ENCODE measurements at regions of chr12 and their contacts with region 1.

Region 1: DNA sequence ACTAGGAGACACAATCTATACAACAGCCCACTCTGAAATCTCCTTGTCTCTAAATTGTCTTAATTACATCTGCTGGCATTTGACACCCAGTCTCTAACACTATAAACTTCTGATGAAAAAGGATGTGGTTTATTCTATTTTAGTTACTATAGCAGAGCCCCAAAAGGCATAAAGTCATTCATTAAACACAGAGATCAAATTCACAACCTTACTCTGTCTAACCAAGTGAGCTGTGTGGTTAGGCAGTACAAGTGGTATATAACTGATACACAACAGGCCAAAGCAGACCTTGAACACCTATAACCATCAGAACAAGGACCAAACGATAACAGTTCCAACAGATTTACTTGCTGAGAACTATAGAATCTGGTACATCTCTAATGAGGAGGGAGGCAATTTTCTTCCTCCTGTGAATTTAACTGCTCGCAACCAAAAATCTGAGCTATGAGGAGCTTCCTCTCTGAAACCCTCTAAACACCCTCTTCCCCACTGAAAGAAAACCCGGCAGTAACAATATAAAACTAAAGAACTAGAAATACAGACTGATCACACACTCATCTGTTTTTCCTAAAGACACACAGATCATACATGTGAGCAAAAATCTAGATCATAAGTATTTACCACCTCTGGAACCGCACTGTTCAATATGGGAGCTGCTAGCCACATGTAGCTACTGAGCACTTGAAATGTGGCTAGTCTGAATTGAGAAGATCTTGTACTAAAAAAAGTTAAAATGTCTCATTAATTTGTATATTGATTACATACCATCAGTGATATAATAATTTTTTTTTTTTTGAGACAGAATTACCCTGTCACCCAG is 17.7 kb downstream of the SPPL3 start:
- DNase-seq: no peak
- ATAC-seq: no peak
- H3K4me3 ChIP-seq: no peak overlapping the region
- H3K27ac ChIP-seq: no peak overlapping the region
- H3K4me1 ChIP-seq: peaks cover 0 to 69% (median 19%) of the 10 kb centered on the region in 12 donors
- H3K27me3 ChIP-seq: no peaks in the 10 kb centered on the region
- CTCF ChIP-seq: no peak
- POLR2A ChIP-seq: no peak

Region 2: DNA sequence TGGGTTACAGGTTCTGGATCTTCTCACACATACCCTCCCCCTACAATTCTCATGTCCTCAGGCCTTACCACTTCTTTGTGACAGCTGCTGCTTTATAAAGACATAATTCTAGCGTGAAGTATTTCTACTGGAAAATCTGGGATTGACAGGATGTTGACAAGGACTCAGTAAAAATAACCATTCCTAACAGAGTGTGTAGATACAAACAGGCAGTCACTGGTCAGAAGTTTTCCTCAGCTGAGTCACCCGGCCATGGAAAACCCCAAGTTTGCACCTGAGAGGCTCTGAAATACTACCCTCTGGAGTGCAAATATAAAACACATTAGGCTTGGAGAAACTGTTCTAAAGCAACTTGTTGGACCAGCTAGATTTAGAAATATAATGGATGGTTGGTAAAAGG is 36.6 kb before region 1 on chr12:
- intact Hi-C with region 1: loop called in 1 of 10 experiments (anchors 5 kb)
- DNase-seq: no peak
- ATAC-seq: peak; percentile 31 to 84 (median 55)
- H3K4me3 ChIP-seq: no peak overlapping the region
- H3K27ac ChIP-seq: peak overlapping the region in 9 of 12 donors; percentile 16 to 73 (median 51)
- H3K4me1 ChIP-seq: peaks cover 0 to 89% (median 67%) of the 10 kb centered on the region in 12 donors
- H3K27me3 ChIP-seq: no peaks in the 10 kb centered on the region
- CTCF ChIP-seq: no peak
- POLR2A ChIP-seq: no peak

Region 3: GRCh38 chr12:121637231-121637914 is 751.0 kb after region 1 on chr12:
- intact Hi-C with region 1: no loop called
- DNase-seq: peak in 3 of 5 donors; percentile 33 to 72 (median 38)
- ATAC-seq: peak in 2 of 4 donors; percentile 52 to 66
- H3K4me3 ChIP-seq: no peak overlapping the region
- H3K27ac ChIP-seq: peak overlapping the region in 1 of 12 donors; percentile 85
- H3K4me1 ChIP-seq: peaks cover 0 to 29% (median 5%) of the 10 kb centered on the region in 12 donors
- H3K27me3 ChIP-seq: no peaks in the 10 kb centered on the region
- CTCF ChIP-seq: no peak
- POLR2A ChIP-seq: no peak

Region 4: GRCh38 chr12:122064025-122064777 is 1177.8 kb after region 1 on chr12:
- intact Hi-C with region 1: loop called in 1 of 10 experiments (anchors 10 kb)
- DNase-seq: peak; percentile 88 to 94 (median 91)
- ATAC-seq: peak; percentile 90 to 95 (median 92)
- H3K4me3 ChIP-seq: peak overlapping the region in 6 of 12 donors; percentile 15 to 32 (median 25)
- H3K27ac ChIP-seq: peak overlapping the region; percentile 33 to 89 (median 76)
- H3K4me1 ChIP-seq: peaks cover 0 to 53% (median 34%) of the 10 kb centered on the region in 12 donors
- H3K27me3 ChIP-seq: no peaks in the 10 kb centered on the region
- CTCF ChIP-seq: peak in 11 of 12 donors; percentile 19 to 65 (median 41)
- POLR2A ChIP-seq: no peak

Measured in heart left ventricle (tissue), 16 donors.